WTC11 (cell line): ENCODE measurements at regions of chr15 and their contacts with region 1.

Region 1: GRCh38 chr15:55407949-55408791 is at the starts of genes CCPG1 and PIERCE2:
- DNase-seq: peak; percentile 93
- ATAC-seq: peak; percentile 94
- H3K4me3 Mint-ChIP-seq: peak within 1 kb of the TSS; percentile 95
- H3K27ac Mint-ChIP-seq: peak within 1 kb of the TSS; percentile 99
- H3K4me1 Mint-ChIP-seq: peaks cover 9% of the 10 kb centered on the region
- H3K27me3 Mint-ChIP-seq: no peaks in the 10 kb centered on the region
- CTCF ChIP-seq: peak; percentile 58
- total RNA-seq, gene CCPG1: 17.1 to 17.8 TPM (median 17.2 TPM) in 3 replicates
- total RNA-seq, gene PIERCE2: 1.6 to 2.5 TPM (median 1.8 TPM) in 3 replicates

Region 2: GRCh38 chr15:55318588-55319494 is 89.3 kb before region 1 on chr15 and contains the starts of genes PIGB and PIGBOS1:
- CTCF ChIA-PET with region 1: interaction called, 19 read pairs
- POLR2A ChIA-PET with region 1: interaction called, 5 read pairs
- DNase-seq: peak; percentile 82
- ATAC-seq: peak; percentile 95
- H3K4me3 Mint-ChIP-seq: peak within 1 kb of the TSS; percentile 94
- H3K27ac Mint-ChIP-seq: peak within 1 kb of the TSS; percentile 96
- H3K4me1 Mint-ChIP-seq: peaks cover 35% of the 10 kb centered on the region
- H3K27me3 Mint-ChIP-seq: no peaks in the 10 kb centered on the region
- CTCF ChIP-seq: no peak
- total RNA-seq, gene PIGB: 5.2 to 8.7 TPM (median 6.9 TPM) in 3 replicates
- total RNA-seq, gene PIGBOS1: 11.2 to 13.0 TPM (median 11.9 TPM) in 3 replicates

Region 3: DNA sequence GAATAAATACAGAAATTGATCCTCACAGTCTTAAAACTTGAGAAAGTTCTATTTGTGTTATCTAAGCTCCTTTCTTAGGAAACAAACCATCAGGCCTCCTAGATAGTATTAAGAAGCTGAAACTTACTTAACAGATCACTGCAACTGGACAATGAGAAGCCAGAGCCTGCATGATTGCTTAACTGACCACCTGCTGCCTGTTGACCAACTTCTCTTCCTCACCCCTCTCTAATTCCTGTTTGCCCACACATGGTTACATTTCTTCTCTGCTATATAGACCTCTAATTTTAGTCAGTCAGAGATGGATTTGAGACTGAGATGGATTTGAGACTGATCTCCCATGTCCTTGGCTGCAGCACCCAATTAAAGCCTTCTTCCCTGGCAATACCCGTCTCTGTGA is 13.5 kb before region 1 on chr15:
- CTCF ChIA-PET with region 1: interaction called, 13 read pairs
- POLR2A ChIA-PET with region 1: interaction called, 5 read pairs
- DNase-seq: no peak
- ATAC-seq: no peak
- H3K4me3 Mint-ChIP-seq: no peak overlapping the region
- H3K27ac Mint-ChIP-seq: no peak overlapping the region
- H3K4me1 Mint-ChIP-seq: peaks cover 16% of the 10 kb centered on the region
- H3K27me3 Mint-ChIP-seq: no peaks in the 10 kb centered on the region
- CTCF ChIP-seq: no peak

Region 4: DNA sequence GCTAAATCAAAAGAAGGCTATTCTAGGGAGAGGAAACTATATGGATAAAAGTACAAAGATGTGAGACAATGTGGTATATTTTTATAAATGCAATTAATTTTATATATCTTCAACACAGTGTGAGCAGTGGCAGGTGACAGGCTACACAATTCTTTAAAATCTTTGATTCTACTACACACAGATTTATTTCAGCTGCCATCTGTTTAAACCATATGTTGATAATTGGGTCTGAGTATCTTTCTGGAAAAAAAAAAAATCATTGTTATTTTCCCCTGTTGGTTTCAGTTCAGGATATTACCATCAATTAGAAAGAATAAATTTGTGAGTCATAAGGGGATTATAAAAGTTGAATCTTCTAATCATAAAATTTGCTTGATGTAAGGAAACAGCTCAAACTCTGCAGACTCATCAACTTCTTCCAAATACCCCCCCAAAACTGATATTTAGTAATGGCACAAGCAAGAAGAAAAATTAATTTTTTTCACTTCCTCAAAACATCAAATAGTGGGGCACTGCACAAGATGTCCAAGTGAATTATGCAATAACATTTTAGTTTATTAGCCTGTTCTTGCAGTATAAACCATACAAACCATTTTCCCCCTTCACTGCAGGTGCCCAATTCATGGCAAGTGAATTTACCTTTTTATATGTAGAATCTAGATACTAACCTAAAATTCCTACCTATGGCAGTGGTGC is 12.1 kb after region 1 on chr15:
- CTCF ChIA-PET with region 1: interaction called, 16 read pairs
- POLR2A ChIA-PET with region 1: interaction called, 3 read pairs
- DNase-seq: no peak
- ATAC-seq: no peak
- H3K4me3 Mint-ChIP-seq: no peak overlapping the region
- H3K27ac Mint-ChIP-seq: no peak overlapping the region
- H3K4me1 Mint-ChIP-seq: peaks cover 23% of the 10 kb centered on the region
- H3K27me3 Mint-ChIP-seq: no peaks in the 10 kb centered on the region
- CTCF ChIP-seq: no peak

Region 5: DNA sequence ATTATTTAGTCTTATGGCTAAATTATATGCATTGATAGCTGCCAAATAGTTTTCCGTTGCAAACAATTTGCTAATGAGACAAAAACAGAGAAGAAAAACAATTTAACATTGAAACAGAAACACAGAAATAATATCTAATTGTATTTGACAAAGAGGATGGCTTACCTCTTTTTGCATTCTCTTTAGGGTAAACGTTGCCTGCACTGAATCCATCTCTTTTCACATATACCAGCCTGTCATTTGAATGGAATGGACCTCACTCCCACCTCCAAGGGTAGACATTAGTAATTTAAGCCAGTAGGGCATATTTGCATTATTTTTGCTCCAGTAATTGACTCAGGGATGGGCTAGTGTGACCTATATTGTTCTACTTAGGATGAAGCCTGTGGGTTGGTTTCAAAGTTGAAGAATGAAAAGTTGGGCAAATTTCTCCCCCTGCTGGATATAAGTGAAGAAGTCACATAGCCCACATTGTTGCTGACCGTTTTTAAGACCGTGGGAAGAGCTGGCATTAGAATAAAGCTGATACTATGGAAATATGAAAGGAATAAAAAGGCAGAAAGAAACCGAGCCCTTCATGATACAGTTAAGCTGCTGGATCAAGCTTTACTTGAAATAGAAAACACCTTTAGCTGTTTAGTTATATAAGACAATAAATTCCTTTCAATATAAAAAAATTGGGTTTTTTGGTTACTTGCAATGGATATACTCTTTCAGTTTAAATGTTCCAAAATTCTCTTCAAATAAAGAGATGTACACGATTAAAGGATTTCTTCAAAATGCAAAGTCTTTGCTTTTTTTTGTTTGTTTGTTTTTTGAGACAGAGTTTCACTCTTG is 27.0 kb after region 1 on chr15:
- CTCF ChIA-PET with region 1: interaction called, 38 read pairs
- POLR2A ChIA-PET with region 1: no interaction called
- DNase-seq: no peak
- ATAC-seq: peak; percentile 80
- H3K4me3 Mint-ChIP-seq: no peak overlapping the region
- H3K27ac Mint-ChIP-seq: no peak overlapping the region
- H3K4me1 Mint-ChIP-seq: peaks cover 4% of the 10 kb centered on the region; the same call in 1 of the 2 replicates
- H3K27me3 Mint-ChIP-seq: no peaks in the 10 kb centered on the region
- CTCF ChIP-seq: no peak